ENCODE measurements at regions of chr4 and their contacts with region 1.

Region 1: DNA sequence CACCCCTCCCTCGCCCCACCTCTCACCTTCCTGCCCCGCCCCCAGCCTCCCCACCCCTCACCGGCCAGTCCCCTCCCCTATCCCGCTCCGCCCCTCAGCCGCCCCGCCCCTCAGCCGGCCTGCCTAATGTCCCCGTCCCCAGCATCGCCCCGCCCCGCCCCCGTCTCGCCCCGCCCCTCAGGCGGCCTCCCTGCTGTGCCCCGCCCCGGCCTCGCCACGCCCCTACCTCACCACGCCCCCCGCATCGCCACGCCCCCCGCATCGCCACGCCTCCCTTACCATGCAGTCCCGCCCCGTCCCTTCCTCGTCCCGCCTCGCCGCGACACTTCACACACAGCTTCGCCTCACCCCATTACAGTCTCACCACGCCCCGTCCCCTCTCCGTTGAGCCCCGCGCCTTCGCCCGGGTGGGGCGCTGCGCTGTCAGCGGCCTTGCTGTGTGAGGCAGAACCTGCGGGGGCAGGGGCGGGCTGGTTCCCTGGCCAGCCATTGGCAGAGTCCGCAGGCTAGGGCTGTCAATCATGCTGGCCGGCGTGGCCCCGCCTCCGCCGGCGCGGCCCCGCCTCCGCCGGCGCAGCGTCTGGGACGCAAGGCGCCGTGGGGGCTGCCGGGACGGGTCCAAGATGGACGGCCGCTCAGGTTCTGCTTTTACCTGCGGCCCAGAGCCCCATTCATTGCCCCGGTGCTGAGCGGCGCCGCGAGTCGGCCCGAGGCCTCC is at the starts of genes HTT and HTT-AS:
- DNase-seq: peak; percentile 100
- ATAC-seq: peak; percentile 89
- H3K4me3 Mint-ChIP-seq: peak within 1 kb of the TSS; percentile 95
- H3K27ac Mint-ChIP-seq: peak within 1 kb of the TSS; percentile 90
- H3K4me1 Mint-ChIP-seq: peaks cover 24% of the 10 kb centered on the region
- H3K27me3 Mint-ChIP-seq: no peaks in the 10 kb centered on the region
- total RNA-seq, gene HTT: 80.1 to 127 TPM
- total RNA-seq, gene HTT-AS: not detected

Region 2: GRCh38 chr4:2418650-2419571 is 655.3 kb before region 1 on chr4 and contains the start of gene CFAP99:
- CTCF ChIA-PET with region 1: no interaction called
- POLR2A ChIA-PET with region 1: no interaction called
- intact Hi-C with region 1: loop called in 1 of 2 experiments (anchors 1 kb)
- DNase-seq: peak; percentile 99
- ATAC-seq: peak; percentile 93
- H3K4me3 Mint-ChIP-seq: peak within 1 kb of the TSS; percentile 82
- H3K27ac Mint-ChIP-seq: peak within 1 kb of the TSS; percentile 68
- H3K4me1 Mint-ChIP-seq: peaks cover 39% of the 10 kb centered on the region
- H3K27me3 Mint-ChIP-seq: peaks cover 27% of the 10 kb centered on the region
- total RNA-seq, gene CFAP99: 0.05 TPM in 1 of 2 experiments, not detected in the other

Region 3: GRCh38 chr4:2755837-2756694 is 318.2 kb before region 1 on chr4 and contains the start of gene TNIP2:
- CTCF ChIA-PET with region 1: no interaction called
- POLR2A ChIA-PET with region 1: no interaction called
- intact Hi-C with region 1: loop called in 1 of 2 experiments (anchors 1 kb)
- DNase-seq: peak; percentile 91
- ATAC-seq: peak; percentile 78
- H3K4me3 Mint-ChIP-seq: peak within 1 kb of the TSS; percentile 79
- H3K27ac Mint-ChIP-seq: peak within 1 kb of the TSS; percentile 66
- H3K4me1 Mint-ChIP-seq: peaks cover 33% of the 10 kb centered on the region
- H3K27me3 Mint-ChIP-seq: no peaks in the 10 kb centered on the region
- total RNA-seq, gene TNIP2: 50.6 to 59.4 TPM

Region 4: DNA sequence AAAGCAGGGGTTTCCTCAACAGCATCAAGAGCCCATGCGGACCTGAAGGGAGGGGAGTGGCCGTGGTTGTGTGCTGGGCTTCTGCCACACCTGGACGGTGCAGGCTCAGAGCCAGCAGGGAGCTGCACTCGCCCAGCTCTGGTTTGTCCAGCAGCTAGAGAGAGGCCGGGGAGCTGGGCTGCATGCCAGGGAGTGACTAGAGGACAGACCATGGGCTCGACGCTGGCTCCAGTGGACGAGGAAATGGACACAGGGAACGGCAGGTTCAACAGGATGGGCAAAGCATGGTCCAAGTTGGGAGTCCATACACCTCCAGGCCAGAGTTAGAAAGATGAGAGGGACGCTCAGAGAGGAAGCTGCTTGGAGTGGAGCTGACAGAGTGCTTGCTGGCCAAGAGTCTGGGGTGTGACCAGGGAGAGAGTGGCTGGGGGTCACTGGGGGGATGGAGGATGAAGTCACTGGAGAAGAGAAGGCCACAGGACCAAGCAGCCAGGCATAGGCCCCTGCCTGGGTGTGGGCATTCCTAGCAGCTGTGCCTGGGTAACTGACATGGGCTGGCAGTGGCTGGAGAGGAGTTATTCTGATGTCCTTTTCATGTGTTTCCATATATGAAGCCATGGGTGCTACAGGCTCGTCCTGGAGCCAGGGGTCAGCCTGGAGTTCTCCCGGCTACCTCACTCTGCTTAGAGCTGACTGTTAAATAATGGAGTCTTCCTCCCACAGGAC is 42.7 kb before region 1 on chr4:
- CTCF ChIA-PET with region 1: no interaction called
- POLR2A ChIA-PET with region 1: no interaction called
- intact Hi-C with region 1: no loop called
- DNase-seq: no peak
- ATAC-seq: no peak
- H3K4me3 Mint-ChIP-seq: no peak overlapping the region
- H3K27ac Mint-ChIP-seq: no peak overlapping the region
- H3K4me1 Mint-ChIP-seq: no peaks in the 10 kb centered on the region
- H3K27me3 Mint-ChIP-seq: no peaks in the 10 kb centered on the region

Region 5: GRCh38 chr4:3047464-3048286 is 26.6 kb before region 1 on chr4:
- CTCF ChIA-PET with region 1: interaction called, 3 read pairs
- POLR2A ChIA-PET with region 1: interaction called, 3 read pairs
- intact Hi-C with region 1: loop called (anchors 1 kb)
- DNase-seq: peak; percentile 89
- ATAC-seq: peak; percentile 98
- H3K4me3 Mint-ChIP-seq: peak overlapping the region; percentile 51
- H3K27ac Mint-ChIP-seq: peak overlapping the region; percentile 69
- H3K4me1 Mint-ChIP-seq: peaks cover 31% of the 10 kb centered on the region
- H3K27me3 Mint-ChIP-seq: no peaks in the 10 kb centered on the region

Region 6: GRCh38 chr4:3248811-3249661 is 174.8 kb after region 1 on chr4 and contains the start of gene MSANTD1:
- CTCF ChIA-PET with region 1: no interaction called
- POLR2A ChIA-PET with region 1: no interaction called
- intact Hi-C with region 1: no loop called
- DNase-seq: no peak
- ATAC-seq: no peak
- H3K4me3 Mint-ChIP-seq: no peak within 1 kb of the TSS
- H3K27ac Mint-ChIP-seq: no peak within 1 kb of the TSS
- H3K4me1 Mint-ChIP-seq: no peaks in the 10 kb centered on the region
- H3K27me3 Mint-ChIP-seq: no peaks in the 10 kb centered on the region
- total RNA-seq, gene MSANTD1: 0.46 to 0.69 TPM

Region 7: GRCh38 chr4:3292571-3293400 is 218.5 kb after region 1 on chr4 and contains the start of gene RGS12:
- CTCF ChIA-PET with region 1: no interaction called
- POLR2A ChIA-PET with region 1: no interaction called
- intact Hi-C with region 1: loop called (anchors 1 to 2 kb)
- DNase-seq: peak; percentile 93
- ATAC-seq: peak; percentile 95
- H3K4me3 Mint-ChIP-seq: peak within 1 kb of the TSS; percentile 81
- H3K27ac Mint-ChIP-seq: peak within 1 kb of the TSS; percentile 64
- H3K4me1 Mint-ChIP-seq: peaks cover 11% of the 10 kb centered on the region
- H3K27me3 Mint-ChIP-seq: peaks cover 4% of the 10 kb centered on the region
- total RNA-seq, gene RGS12: 8.0 to 9.4 TPM

Region 8: DNA sequence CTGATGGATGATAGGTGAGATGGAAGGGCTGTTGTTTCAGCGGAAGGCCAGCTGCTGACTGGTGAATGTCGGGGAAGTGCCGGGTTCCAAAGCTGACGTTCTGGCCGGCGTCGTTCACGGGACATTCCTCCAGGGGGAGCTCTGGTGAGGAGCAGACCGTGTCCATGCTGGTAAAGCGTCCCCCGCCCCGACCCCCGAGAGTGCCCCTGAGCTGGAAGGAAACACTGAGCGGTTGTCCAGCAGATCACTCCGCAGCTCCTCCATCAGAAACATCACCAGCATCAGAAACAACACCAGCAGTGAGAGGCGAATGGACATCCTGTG is 673.3 kb after region 1 on chr4:
- CTCF ChIA-PET with region 1: no interaction called
- POLR2A ChIA-PET with region 1: no interaction called
- intact Hi-C with region 1: no loop called
- DNase-seq: peak; percentile 43
- ATAC-seq: no peak
- H3K4me3 Mint-ChIP-seq: no peak overlapping the region
- H3K27ac Mint-ChIP-seq: no peak overlapping the region
- H3K4me1 Mint-ChIP-seq: no peaks in the 10 kb centered on the region
- H3K27me3 Mint-ChIP-seq: peaks cover 40% of the 10 kb centered on the region

Measured in activated CD4-positive, alpha-beta T cell treated with anti-CD3 and anti-CD28 coated beads for 36 hours (primary cell).